GM12878 (cell line): ENCODE measurements at regions of chr2 and their contacts with region 1.

Region 1: GRCh38 chr2:44833171-44834069 is 108.1 kb upstream of the SIX3 start:
- DNase-seq: peak; percentile 86
- ATAC-seq: peak; percentile 84
- H3K4me3 ChIP-seq: peak overlapping the region; percentile 19; the same call in 1 of the 2 replicates
- H3K27ac ChIP-seq: peak overlapping the region; percentile 62
- H3K4me1 ChIP-seq: peaks cover 43% of the 10 kb centered on the region
- H3K27me3 ChIP-seq: no peaks in the 10 kb centered on the region
- CTCF ChIP-seq: no peak
- EP300 ChIP-seq: peak in 1 of 2 experiments; percentile 63; a peak in 2 of 4 replicates
- POLR2A ChIP-seq: no peak
- RAD21 ChIP-seq: no peak

Region 2: DNA sequence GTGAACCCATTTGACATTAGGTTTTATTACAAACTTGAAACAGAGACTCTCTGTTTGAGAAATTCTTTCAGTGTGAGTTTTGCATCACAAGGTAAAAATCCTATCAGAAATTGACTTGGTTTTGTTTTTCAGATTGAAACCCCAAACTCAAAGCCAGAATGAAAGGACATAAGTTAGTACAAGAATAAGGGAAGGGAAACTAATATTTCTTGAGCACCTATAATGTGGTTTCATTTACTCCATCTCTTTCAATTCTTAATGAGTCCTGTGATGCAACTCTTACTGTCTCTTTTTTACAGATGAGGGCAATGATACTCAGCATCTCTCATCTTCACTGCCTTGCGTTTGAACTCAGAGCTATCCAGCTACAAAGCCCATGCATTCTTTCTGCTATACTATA is 101.9 kb before region 1 on chr2:
- CTCF ChIA-PET with region 1: no interaction called
- POLR2A ChIA-PET with region 1: interaction called, 3 read pairs
- RAD21 ChIA-PET with region 1: no interaction called
- SMC1A ChIA-PET with region 1: interaction called, 3 read pairs
- in situ Hi-C with region 1: no loop called
- intact Hi-C with region 1: loop called (anchors 5 kb)
- DNase-seq: peak; percentile 58
- ATAC-seq: peak; percentile 99
- H3K4me3 ChIP-seq: no peak overlapping the region
- H3K27ac ChIP-seq: no peak overlapping the region; the same call in 1 of the 2 replicates
- H3K4me1 ChIP-seq: peaks cover 20% of the 10 kb centered on the region
- H3K27me3 ChIP-seq: no peaks in the 10 kb centered on the region
- CTCF ChIP-seq: no peak
- EP300 ChIP-seq: peak; percentile 80 to 94
- POLR2A ChIP-seq: no peak
- RAD21 ChIP-seq: no peak

Region 3: DNA sequence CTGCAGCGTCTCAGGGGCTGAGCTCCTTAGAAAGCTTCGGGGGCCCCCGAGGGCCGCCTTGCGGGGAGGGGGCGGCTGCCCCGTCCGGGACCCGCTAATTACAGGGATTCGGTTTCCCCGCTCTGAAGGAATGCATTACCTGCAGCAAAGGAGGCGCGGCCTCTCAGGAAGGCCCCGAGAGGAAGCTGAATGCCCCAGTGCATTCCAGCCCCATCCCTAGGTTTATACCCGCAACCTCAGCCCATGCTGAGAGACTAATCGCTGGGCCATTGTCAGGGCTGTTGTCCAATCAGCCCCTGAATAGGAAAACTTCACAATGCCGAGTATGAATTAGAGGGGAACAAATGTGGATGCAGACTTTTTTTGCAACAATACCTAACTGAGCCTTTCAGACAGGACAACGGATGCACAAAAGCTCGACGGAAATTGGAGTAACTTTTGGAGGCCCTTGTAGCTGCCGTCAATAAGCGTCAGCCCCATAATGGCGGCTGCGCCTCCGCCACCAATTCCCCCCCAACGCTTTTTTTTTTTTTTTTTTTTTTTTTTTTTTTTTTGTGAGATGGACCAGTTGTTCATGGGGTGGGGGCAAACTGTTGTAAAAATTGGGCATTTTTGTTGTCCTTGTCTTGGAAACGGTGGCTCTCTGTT is 30.5 kb before region 1 on chr2:
- CTCF ChIA-PET with region 1: interaction called, 3 read pairs
- POLR2A ChIA-PET with region 1: interaction called, 7 read pairs
- RAD21 ChIA-PET with region 1: interaction called, 3 read pairs
- SMC1A ChIA-PET with region 1: interaction called, 13 read pairs
- in situ Hi-C with region 1: no loop called
- intact Hi-C with region 1: no loop called
- DNase-seq: no peak
- ATAC-seq: no peak
- H3K4me3 ChIP-seq: no peak overlapping the region
- H3K27ac ChIP-seq: no peak overlapping the region
- H3K4me1 ChIP-seq: peaks cover 3% of the 10 kb centered on the region
- H3K27me3 ChIP-seq: peaks cover 0 to 6% of the 10 kb centered on the region in 2 experiments
- CTCF ChIP-seq: no peak
- EP300 ChIP-seq: no peak
- POLR2A ChIP-seq: no peak
- RAD21 ChIP-seq: no peak

Region 4: DNA sequence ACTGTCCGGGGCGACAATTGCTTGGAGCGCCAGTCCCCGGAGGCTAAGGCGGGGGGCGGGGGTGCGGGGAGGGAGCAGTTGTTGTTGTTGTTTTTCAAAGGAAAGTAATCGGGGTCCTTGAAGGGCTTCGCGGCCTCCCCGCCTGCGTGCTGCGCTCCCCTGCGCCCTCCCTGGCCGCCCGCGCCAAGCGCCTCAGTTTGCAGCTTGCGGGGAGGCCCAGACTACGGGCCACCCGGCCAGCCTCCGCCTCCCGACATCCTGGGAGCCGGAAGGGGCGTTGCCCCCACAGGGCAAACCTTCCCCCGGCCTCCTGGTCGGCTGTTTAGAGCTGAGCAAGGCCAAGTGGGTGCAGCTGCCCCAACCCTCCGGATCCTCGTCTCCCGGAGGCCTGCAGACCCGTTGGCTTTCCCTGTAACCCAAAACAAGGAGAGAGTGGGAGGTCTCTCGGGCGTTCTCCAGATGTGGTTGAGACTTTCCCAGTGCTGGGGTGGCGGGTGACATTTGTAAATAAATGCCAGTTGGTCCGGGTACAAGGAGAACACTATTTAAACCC is 104.3 kb after region 1 on chr2:
- CTCF ChIA-PET with region 1: no interaction called
- POLR2A ChIA-PET with region 1: no interaction called
- RAD21 ChIA-PET with region 1: no interaction called
- SMC1A ChIA-PET with region 1: no interaction called
- in situ Hi-C with region 1: no loop called
- intact Hi-C with region 1: no loop called
- DNase-seq: no peak
- ATAC-seq: peak; percentile 65
- H3K4me3 ChIP-seq: no peak overlapping the region
- H3K27ac ChIP-seq: no peak overlapping the region
- H3K4me1 ChIP-seq: no peaks in the 10 kb centered on the region
- H3K27me3 ChIP-seq: peaks cover 32 to 41% of the 10 kb centered on the region in 2 experiments
- CTCF ChIP-seq: no peak; a peak in 1 of 6 replicates
- EP300 ChIP-seq: no peak
- POLR2A ChIP-seq: no peak
- RAD21 ChIP-seq: no peak